WTC11 (cell line): ENCODE measurements at regions of chr1 and their contacts with region 1.

Region 1: GRCh38 chr1:10867138-10867721 is 70.8 kb upstream of the CASZ1 start:
- DNase-seq: peak; percentile 77
- ATAC-seq: peak; percentile 74
- H3K4me3 Mint-ChIP-seq: peak overlapping the region; percentile 56
- H3K27ac Mint-ChIP-seq: no peak overlapping the region
- H3K4me1 Mint-ChIP-seq: peaks cover 40% of the 10 kb centered on the region
- H3K27me3 Mint-ChIP-seq: peaks cover 40% of the 10 kb centered on the region
- CTCF ChIP-seq: peak; percentile 87; the same call in 1 of the 2 replicates

Region 2: DNA sequence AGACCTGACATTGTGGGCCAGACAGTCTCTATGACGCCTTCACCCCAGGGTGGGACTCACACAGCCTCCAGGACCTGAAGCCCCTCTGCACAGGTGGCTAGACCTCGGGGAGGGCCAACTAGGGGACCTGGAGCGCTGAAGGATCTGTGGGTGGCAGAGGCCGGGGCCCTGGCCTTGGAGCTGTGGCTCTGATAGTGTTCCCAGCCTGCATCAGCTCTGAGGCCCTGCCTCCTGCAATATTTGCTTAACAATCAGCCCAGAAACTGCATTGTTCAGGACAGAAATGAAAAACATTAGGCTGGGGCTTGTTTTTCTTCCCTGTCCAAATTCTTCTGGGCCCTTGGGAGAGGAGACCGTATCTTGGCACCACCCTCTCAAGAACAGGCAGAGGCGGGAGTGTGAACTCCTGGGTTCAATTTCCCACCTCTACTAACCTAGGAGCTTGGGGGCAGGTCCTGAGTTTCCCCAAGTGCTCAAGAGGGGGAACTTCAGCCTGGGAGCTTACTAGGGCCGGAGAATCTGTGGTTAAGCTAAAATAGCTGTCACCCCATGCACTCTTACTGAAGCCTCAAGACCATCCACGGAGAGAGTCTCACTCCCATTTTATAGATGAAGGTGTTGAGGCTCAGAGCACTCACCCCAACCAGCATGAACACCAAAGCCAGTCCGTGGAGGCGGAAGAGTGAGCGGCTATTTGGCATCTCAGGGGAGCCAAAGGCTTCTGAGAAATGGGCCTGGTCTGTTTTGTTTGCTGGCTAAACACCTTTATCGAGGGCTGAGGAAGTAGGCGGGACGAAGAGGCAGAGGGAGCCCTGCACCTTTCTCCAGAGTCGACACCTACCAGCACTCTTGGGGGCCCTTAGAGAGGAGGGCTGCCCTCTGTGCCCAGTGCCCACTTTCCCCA is 52.0 kb before region 1 on chr1:
- CTCF ChIA-PET with region 1: interaction called, 10 read pairs
- POLR2A ChIA-PET with region 1: no interaction called
- DNase-seq: no peak
- ATAC-seq: peak; percentile 66
- H3K4me3 Mint-ChIP-seq: no peak overlapping the region
- H3K27ac Mint-ChIP-seq: peak overlapping the region; percentile 82
- H3K4me1 Mint-ChIP-seq: peaks cover 26% of the 10 kb centered on the region
- H3K27me3 Mint-ChIP-seq: no peaks in the 10 kb centered on the region; the same call in 1 of the 2 replicates
- CTCF ChIP-seq: no peak

Region 3: GRCh38 chr1:10877894-10878293 is 10.7 kb after region 1 on chr1:
- CTCF ChIA-PET with region 1: interaction called, 14 read pairs
- POLR2A ChIA-PET with region 1: no interaction called
- DNase-seq: no peak
- ATAC-seq: no peak
- H3K4me3 Mint-ChIP-seq: no peak overlapping the region
- H3K27ac Mint-ChIP-seq: no peak overlapping the region
- H3K4me1 Mint-ChIP-seq: no peaks in the 10 kb centered on the region
- H3K27me3 Mint-ChIP-seq: no peaks in the 10 kb centered on the region; the same call in 1 of the 2 replicates
- CTCF ChIP-seq: no peak